Cardiac septum (tissue), 1 donor: ENCODE measurements at regions of chr13 and their contacts with region 1.

Region 1: DNA sequence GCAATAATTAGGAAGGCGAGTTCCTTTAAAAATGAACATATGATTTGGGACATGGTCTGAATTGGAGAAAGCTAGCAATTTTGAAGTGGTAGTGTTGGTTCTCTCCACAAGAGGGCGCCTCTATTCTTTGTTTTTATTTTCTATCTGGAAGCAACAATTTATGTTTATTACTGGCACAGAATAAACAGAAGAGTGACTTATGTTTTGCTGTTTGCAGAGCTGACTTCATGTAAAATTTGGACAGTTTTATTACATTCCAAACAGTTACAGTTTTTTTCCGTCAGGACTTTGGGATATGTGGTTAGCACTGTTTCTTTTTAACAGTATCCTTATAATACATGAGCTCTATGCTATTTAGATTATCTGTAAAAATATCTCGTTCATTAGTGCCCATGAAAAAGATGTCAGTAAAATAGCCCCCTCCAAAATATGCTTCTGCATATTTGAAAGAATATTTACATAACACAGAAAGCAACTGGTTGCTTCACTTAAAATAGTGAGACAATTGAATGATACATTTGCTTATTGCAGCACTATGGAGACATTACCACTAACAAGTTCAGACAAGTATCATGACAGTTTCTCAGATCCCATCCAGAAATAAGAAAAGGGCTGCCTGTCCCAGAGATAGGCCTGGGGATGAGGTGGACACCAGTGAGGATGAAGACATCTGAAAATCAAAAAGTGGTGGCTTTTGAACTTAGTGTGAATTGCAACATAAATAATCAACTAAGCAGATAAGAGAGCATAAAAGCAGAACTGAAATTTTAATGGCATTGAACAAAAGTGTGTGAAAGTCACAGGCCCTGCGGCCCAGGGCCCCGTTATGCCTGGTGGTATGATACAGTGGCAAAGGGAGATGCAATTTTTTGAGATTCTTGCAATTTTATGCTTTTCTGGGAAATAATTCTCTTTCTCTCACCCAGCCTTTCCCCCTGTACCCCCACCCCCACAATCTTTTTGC is 32.3 kb upstream of the FGF9 start:
- DNase-seq: no peak

Region 2: DNA sequence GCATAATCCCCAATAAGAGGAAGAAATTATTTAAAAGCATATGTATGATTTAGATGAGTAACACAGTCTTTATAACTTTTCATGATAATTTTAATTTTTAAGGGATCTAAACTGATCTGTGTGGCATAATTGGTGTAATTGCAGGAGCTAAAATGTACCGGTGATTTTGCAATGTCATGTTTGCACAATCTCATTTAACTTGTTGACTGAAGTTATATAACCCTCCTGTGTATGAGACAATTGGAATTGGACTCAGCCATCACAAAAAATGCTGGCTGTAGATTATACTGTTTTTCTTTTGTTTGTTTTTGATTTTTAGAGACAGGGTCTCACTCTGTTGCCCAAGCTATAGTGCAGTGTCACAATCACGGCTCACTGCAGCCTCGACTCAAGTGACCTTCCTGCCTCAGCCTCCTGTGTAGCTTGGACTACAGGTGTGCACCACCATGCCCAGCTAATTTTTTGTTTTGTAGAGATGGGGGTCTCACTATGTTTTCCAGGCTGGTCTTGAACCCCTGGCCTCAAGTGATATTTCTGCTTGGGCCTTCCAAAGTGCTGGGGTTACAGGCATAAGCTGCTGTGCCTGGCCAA is 58.4 kb after region 1 on chr13:
- intact Hi-C with region 1: no loop called
- DNase-seq: no peak

Region 3: DNA sequence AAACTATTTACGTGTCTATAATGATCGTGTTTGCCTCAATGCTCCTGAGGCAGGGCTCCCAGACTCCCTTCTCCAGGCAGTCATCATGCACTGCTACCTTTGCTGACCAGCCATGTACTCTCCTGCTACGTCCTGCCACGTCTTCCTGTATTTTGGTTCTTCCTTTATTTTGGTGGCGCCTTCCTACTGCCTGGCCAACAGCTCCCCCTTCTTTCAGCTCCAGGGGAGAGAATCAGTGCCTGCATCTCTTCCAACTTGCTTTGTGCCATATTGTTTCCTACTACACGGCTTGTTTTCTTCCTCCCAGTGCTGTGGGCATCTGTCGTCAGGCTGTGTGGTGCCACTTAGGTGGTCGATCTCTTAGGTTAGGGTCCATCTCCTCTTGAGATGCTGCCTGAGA is 128.4 kb after region 1 on chr13:
- intact Hi-C with region 1: no loop called
- DNase-seq: no peak

Region 4: DNA sequence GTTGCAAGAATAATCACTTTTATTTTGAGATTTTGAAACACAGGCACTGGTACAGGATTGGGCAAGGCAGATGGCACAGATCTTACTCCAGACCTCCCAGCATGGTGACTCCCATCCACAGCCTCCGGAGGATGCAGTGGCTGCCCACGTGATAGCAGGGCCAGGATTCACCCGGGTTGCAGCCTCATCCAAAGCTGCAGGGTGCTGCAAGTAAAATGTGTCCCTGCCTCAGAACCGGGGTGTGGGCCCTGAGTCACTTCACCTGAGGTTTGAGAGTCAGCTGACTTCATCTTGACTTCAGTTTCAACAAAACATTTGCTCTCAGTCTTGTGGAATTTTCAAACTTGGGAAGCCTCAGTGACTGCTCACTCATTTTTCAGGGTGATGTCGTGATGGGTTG is 234.2 kb after region 1 on chr13:
- intact Hi-C with region 1: no loop called
- DNase-seq: no peak

Region 5: GRCh38 chr13:22278336-22278929 is 639.8 kb after region 1 on chr13:
- intact Hi-C with region 1: loop called (anchors 5 kb)
- DNase-seq: no peak

Region 6: DNA sequence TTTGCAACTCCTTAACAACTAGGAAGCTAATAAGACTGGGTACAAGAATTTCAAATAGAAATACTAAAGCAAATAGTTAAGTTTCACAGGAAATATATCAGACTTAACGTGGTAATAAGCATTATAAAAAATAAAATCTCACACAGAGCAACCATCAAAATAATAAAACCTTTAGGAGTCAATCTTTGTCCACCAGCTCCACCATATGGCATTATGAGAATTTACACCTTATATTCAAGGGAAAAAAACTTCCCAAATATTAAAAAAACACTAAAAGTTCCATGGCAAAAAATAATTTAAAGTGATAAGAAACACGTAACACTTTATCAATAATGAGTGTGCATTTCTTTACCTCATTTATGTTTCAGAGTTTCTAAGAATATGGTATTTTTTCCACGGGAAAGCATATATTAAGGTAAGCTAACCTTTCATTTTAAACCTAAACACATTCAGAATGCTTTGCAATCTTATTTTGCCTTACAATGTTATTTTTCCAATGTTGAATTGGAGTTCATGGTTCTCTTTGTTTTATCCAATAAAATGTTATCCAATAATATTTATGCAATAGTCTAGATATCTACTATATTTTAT is 1119.0 kb after region 1 on chr13:
- intact Hi-C with region 1: loop called (anchors 10 kb)
- DNase-seq: no peak